ENCODE measurements at regions of chr16 and their contacts with region 1.

Region 1: DNA sequence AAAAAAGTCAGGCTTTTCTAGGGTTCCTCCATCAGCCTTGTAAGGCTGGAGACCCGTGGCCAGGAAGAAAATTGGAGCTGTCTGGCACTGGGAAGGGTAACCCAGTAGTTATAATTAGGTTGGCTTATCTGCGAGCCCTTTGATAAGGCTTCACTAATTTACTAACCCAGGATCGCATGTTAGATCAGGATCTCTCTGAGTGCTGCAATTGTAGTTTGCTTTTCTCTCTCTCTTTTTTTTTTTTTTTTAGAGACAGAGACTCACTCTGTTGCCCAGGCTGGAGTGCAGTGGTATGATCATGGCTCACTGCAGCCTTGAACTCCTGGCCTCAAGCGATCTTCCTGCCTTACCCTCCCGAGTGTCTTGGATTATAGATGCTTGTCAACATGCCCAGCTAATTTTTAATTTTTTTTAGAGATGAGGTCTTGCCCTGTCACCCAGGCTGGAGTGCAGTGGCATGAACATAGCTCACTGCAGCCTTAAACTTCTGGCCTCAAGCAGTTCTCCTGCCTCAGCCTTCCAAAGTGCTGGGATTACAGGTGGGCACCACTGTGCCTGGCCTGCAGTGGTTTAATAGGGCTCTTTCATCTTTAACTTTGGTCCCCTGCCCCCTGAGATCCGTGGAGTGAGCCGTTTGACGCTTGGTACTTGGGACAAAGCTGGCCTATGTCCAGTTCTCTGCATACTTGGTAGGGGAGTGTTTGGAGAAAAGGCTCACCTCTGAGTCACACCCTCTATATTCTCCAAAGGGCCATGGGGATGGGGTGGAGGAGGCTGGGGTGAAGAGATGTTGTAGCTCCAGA is 17.2 kb downstream of the ABCC1 start:
- DNase-seq: peak; percentile 92 to 94
- ATAC-seq: peak; percentile 92 to 99
- H3K4me3 ChIP-seq: no peak overlapping the region
- H3K27ac ChIP-seq: peak overlapping the region; percentile 81 to 95
- H3K4me1 ChIP-seq: peaks cover 70% of the 10 kb centered on the region
- CTCF ChIP-seq: no peak
- EP300 ChIP-seq: peak in 1 of 2 experiments; percentile 43; a peak in 2 of 5 replicates
- POLR2A ChIP-seq: no peak
- RAD21 ChIP-seq: peak in 1 of 2 experiments; percentile 26; a peak in 3 of 5 replicates

Region 2: DNA sequence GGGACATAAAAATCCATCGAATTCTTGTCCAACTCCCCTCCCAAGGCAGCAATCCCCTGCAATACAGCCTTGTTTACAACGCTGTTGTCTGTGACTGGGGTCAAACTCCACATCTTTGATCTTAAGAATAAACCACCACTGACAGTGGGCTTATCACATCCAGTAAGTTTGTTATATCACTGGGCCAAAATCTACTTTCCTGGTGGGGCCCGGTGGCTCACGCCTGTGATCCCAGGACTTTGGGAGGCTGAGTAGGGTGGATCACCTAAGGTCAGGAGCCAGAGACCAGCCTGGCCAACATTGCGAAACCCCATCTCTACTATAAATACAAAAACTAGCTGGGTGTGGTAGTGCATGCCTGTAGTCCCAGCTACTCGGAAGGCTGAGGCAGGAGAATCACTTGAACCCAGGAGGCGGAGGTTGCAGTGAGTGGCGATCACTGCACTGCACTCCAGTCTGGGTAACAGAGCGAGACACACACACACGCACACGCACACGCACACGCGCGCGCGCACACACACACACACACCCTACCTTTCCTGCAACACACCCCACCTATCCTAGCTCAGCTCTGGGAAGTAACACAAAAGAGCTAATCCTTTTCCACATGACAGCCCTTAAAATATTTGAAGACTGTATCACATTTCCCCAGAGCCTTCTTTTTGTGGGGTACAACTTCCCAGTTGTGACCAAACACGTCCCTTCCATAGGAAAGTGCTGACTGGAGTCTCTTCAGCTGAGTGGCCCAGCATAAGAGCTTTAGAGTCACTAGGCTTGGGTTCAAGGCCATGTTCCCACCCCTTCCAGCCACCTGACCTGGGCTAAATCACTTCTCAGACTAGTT is 38.1 kb before region 1 on chr16:
- CTCF ChIA-PET with region 1: no interaction called
- POLR2A ChIA-PET with region 1: no interaction called
- DNase-seq: peak in 1 of 2 experiments; percentile 31
- ATAC-seq: peak in 1 of 2 experiments; percentile 62; a peak in 3 of 6 replicates
- H3K4me3 ChIP-seq: no peak overlapping the region
- H3K27ac ChIP-seq: peak overlapping the region; percentile 2 to 73; a peak in 4 of 6 replicates
- H3K4me1 ChIP-seq: peaks cover 12% of the 10 kb centered on the region
- CTCF ChIP-seq: no peak
- EP300 ChIP-seq: no peak
- POLR2A ChIP-seq: no peak
- RAD21 ChIP-seq: no peak

Region 3: DNA sequence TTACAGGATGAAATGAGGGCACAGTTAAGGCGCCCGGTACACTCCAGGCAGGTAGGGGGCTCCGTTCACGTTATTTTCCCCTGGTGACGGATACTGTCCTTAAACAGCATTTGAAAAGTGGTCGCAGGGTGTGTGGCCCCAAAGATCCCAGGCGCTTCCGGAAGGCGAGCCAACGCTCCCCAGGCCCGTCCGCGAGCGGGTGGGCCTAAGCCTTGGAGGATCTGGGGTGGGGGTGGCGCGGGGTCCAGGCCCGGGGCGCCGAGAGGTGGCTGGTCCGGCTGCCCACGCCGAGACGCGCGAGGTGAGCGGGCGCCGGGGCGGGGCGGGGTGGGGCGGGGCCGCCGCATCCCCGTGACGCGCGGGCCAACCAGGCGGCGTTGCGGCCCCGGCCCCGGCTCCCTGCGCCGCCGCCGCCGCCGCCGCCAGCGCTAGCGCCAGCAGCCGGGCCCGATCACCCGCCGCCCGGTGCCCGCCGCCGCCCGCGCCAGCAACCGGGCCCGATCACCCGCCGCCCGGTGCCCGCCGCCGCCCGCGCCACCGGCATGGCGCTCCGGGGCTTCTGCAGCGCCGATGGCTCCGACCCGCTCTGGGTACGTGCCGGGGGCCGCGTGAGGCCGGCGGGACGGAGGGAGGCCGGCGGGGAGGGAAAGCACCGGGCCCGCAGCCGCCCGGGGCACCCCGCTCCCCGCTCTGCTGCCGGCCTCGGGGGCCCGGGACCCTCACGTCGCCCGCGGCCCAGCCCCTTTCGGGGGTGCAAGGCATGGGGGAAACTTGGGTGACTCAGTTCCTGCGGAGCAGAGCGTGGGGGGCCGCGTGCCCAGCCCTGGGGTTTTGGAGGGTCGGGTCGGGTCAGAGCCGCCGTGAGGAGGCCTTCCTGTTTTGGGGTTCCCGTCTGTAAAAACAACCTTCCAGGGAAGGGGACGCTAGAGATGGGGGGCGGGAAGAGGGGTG is 17.1 kb before region 1 on chr16 and contains the start of gene ABCC1:
- CTCF ChIA-PET with region 1: interaction called, 11 read pairs
- POLR2A ChIA-PET with region 1: interaction called, 6 read pairs
- DNase-seq: peak; percentile 63 to 65
- ATAC-seq: peak; percentile 56 to 82
- H3K4me3 ChIP-seq: peak within 1 kb of the TSS; percentile 97
- H3K27ac ChIP-seq: peak within 1 kb of the TSS; percentile 100
- H3K4me1 ChIP-seq: peaks cover 69% of the 10 kb centered on the region
- CTCF ChIP-seq: peak; percentile 23; the same call in 1 of the 3 replicates
- EP300 ChIP-seq: no peak
- POLR2A ChIP-seq: peak; percentile 28
- RAD21 ChIP-seq: peak in 1 of 2 experiments; percentile 29; a peak in 1 of 5 replicates
- polyA plus RNA-seq, gene ABCC1: 56.5 and 108 TPM in 2 replicates

Region 4: GRCh38 chr16:15976929-15977637 is 10.5 kb after region 1 on chr16:
- CTCF ChIA-PET with region 1: interaction called, 6 read pairs
- POLR2A ChIA-PET with region 1: interaction called, 13 read pairs
- DNase-seq: peak in 1 of 2 experiments; percentile 76
- ATAC-seq: peak; percentile 71 to 79
- H3K4me3 ChIP-seq: no peak overlapping the region
- H3K27ac ChIP-seq: peak overlapping the region; percentile 84 to 92
- H3K4me1 ChIP-seq: peaks cover 74% of the 10 kb centered on the region
- CTCF ChIP-seq: no peak
- EP300 ChIP-seq: peak; percentile 32 to 51; a peak in 2 of 5 replicates
- POLR2A ChIP-seq: no peak
- RAD21 ChIP-seq: no peak

Measured in A549 (cell line).